ENCODE measurements at regions of chr3 and their contacts with region 1.

Region 1: GRCh38 chr3:15377961-15378791 is 45.8 kb upstream of the SH3BP5 start:
- DNase-seq: peak; percentile 96
- ATAC-seq: peak; percentile 98
- H3K4me3 ChIP-seq: no peak overlapping the region
- H3K27ac ChIP-seq: peak overlapping the region; percentile 77
- H3K4me1 ChIP-seq: peaks cover 5% of the 10 kb centered on the region
- H3K27me3 ChIP-seq: no peaks in the 10 kb centered on the region
- CTCF ChIP-seq: peak; percentile 83

Region 2: DNA sequence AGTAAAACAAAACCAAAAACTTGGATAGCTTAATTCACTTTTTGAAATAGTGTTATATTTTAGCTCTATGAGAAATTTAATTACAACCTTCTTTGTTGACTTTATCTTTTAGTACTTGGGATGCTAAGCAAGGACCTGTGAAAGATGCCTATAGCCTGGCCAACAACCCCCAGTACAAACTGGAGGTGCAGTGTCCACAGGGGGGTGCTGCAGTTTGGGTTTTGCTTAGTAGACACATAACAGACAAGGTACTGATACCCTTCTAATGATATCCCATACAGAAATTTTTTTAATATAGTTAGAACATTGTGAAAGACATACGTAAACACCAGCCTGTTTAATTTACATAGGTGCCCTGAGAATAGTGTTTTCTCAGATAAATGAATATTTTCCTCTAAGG is 136.8 kb before region 1 on chr3:
- intact Hi-C with region 1: no loop called
- DNase-seq: no peak
- ATAC-seq: no peak
- H3K4me3 ChIP-seq: no peak overlapping the region
- H3K27ac ChIP-seq: no peak overlapping the region
- H3K4me1 ChIP-seq: no peaks in the 10 kb centered on the region
- H3K27me3 ChIP-seq: no peaks in the 10 kb centered on the region
- CTCF ChIP-seq: peak; percentile 37

Region 3: DNA sequence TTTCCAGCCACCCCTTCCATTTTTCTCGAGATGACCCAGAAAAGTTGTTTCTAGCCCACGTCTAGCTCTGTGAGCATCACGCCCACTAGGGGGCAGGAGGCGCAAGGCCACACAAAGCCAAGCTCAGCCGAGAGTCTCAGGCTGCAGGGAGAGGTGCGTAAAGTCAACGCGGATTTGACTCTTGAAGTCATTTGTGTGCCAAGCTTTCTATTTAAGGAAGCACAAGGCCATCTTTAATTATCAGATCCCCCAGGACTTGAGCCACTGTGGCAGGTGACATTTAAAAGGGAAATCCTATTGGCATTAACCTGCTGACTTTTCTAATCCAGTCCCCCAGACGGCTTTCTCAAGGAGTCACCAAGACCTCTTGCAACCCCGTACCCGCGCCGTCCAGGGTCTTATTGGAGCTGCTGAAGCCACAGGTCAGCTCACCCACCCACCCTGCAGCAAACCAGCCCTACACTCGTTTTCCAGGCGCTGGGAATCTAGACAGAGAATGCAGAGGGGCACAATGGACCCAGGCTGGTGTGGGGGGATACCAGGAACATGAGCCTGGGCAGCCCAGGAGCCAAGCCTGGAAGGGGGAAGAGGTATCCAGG is 110.0 kb before region 1 on chr3:
- intact Hi-C with region 1: loop called (anchors 10 kb)
- DNase-seq: peak; percentile 91
- ATAC-seq: peak; percentile 87
- H3K4me3 ChIP-seq: no peak overlapping the region
- H3K27ac ChIP-seq: no peak overlapping the region
- H3K4me1 ChIP-seq: peaks cover 65% of the 10 kb centered on the region
- H3K27me3 ChIP-seq: no peaks in the 10 kb centered on the region
- CTCF ChIP-seq: peak; percentile 94

Region 4: DNA sequence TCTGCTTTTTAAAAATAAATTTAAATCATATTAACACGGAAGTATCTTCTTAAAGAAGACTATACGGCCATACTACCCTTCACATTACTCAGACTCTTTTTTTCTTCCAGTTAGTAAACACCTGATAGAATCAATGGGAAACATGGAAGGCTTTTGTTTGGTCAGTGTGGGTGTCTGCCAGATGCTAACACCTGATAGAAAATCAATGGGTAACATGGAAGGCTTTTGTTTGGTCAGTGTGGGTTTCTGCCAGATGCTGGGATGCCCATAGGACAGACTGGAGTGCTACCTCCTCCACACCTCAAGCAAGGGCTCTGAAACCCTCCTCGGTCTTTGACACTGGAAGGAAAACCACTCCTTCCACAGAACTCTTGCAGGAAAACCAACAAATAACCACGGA is 194.0 kb after region 1 on chr3:
- intact Hi-C with region 1: no loop called
- DNase-seq: no peak
- ATAC-seq: no peak
- H3K4me3 ChIP-seq: no peak overlapping the region
- H3K27ac ChIP-seq: no peak overlapping the region
- H3K4me1 ChIP-seq: no peaks in the 10 kb centered on the region
- H3K27me3 ChIP-seq: no peaks in the 10 kb centered on the region
- CTCF ChIP-seq: no peak

Region 5: GRCh38 chr3:15753056-15753710 is 375.0 kb after region 1 on chr3:
- intact Hi-C with region 1: no loop called
- DNase-seq: no peak
- ATAC-seq: peak; percentile 72 to 87
- H3K4me3 ChIP-seq: no peak overlapping the region
- H3K27ac ChIP-seq: no peak overlapping the region
- H3K4me1 ChIP-seq: peaks cover 9% of the 10 kb centered on the region
- H3K27me3 ChIP-seq: no peaks in the 10 kb centered on the region
- CTCF ChIP-seq: no peak

Region 6: DNA sequence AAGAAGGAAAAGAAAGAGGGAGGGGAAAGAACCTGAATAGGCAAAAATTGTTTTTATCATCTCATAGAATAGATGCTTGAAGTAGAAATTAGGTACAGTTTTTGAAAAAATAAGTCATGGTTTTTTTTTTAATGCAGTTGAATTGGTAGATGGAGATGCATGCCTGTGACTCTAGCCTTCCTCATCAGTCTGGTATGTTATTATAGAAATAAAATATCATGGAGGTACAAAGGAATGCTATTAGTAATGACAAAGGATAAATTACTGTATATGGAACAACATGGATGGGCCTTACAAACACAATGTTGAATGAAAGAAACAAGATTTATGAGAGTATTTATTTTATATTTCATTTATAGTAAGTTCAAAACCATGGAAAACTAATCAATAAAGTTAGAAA is 633.9 kb after region 1 on chr3:
- intact Hi-C with region 1: no loop called
- DNase-seq: no peak
- ATAC-seq: no peak
- H3K4me3 ChIP-seq: no peak overlapping the region
- H3K27ac ChIP-seq: no peak overlapping the region
- H3K4me1 ChIP-seq: no peaks in the 10 kb centered on the region
- H3K27me3 ChIP-seq: no peaks in the 10 kb centered on the region
- CTCF ChIP-seq: no peak

Measured in lower lobe of right lung (tissue), 2 donors.